B cell (primary cell): ENCODE measurements at regions of chr4 and their contacts with region 1.

Region 1: DNA sequence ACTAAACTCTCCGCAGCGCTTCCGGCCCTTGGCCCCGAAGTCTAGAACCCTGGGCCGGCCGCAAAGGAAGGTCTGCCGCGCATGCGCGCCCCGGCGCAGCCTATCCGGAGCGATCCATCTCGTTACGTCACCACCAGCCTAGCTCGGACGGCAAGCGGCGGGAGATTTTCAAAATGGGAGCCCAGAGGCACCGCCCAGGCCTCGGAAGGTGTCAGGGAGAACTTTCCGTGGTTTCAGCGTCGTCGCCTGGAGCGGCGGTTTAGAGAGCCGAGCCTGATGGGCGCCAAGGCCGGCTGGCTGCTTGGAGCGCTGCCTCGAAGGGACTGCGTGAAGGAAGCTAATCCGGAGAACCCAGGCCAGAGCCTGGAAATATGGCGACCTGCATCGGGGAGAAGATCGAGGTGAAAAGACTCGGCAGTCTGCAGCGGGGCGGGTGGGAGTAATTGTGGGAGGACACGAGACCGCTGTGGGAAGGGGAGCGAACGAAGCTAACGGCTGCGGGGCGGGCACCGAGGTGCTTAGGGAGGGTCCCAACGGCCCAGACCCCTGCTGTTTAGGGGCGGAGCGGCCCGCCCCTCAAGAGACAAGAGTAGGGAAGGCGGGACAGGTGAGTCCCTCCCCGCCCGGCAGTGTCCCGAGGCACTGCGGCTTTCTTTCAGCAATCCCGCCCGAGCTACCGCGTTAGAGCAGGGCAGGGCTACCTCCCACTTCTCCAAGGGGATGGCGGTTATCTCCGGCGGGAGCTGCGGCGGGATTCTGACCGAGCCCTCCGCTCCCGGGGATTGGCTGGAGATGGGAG is at the start of gene PLK4:
- DNase-seq: peak; percentile 96
- ATAC-seq: peak; percentile 95
- H3K4me3 ChIP-seq: peak within 1 kb of the TSS; percentile 72 to 97 (median 84)
- H3K4me3 Mint-ChIP-seq: peak within 1 kb of the TSS; percentile 98
- H3K27ac ChIP-seq: peak within 1 kb of the TSS; percentile 83 to 88
- H3K27ac Mint-ChIP-seq: peak within 1 kb of the TSS; percentile 97
- H3K4me1 ChIP-seq: peaks cover 7 to 10% of the 10 kb centered on the region in 2 donors
- H3K4me1 Mint-ChIP-seq: peaks cover 17% of the 10 kb centered on the region
- H3K27me3 ChIP-seq: no peaks in the 10 kb centered on the region
- H3K27me3 Mint-ChIP-seq: no peaks in the 10 kb centered on the region
- CTCF ChIP-seq: no peak
- total RNA-seq, gene PLK4: 2.8 and 4.3 TPM in 2 replicates

Region 2: GRCh38 chr4:126583509-126583908 is 1297.5 kb before region 1 on chr4:
- CTCF ChIA-PET with region 1: no interaction called
- POLR2A ChIA-PET with region 1: no interaction called
- intact Hi-C with region 1: no loop called
- DNase-seq: no peak
- ATAC-seq: no peak
- H3K4me3 ChIP-seq: no peak overlapping the region
- H3K4me3 Mint-ChIP-seq: no peak overlapping the region
- H3K27ac ChIP-seq: no peak overlapping the region
- H3K27ac Mint-ChIP-seq: no peak overlapping the region
- H3K4me1 ChIP-seq: no peaks in the 10 kb centered on the region
- H3K4me1 Mint-ChIP-seq: no peaks in the 10 kb centered on the region
- H3K27me3 ChIP-seq: no peaks in the 10 kb centered on the region
- H3K27me3 Mint-ChIP-seq: no peaks in the 10 kb centered on the region
- CTCF ChIP-seq: no peak

Region 3: DNA sequence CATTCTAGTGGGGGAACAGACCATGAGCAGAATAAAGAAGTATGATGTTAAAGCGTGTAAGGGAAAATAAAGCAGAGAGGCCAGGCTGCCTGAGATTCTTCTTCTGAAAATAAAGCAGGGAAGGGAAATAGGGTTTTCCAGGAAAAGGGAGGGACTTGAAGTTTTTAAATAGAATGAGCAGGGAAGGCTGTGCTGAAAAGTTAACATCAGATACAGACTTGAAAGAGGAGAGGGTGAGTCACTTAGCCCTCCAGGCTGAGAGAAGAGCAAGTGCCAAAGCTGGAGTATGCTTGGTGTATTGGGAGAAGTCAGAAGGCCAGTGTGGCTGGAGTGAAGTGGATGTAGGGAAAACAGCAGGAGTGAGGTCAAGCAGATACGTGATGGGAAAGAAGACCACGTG is 10.3 kb before region 1 on chr4:
- CTCF ChIA-PET with region 1: no interaction called
- POLR2A ChIA-PET with region 1: no interaction called
- intact Hi-C with region 1: no loop called
- DNase-seq: no peak
- ATAC-seq: no peak
- H3K4me3 ChIP-seq: no peak overlapping the region
- H3K4me3 Mint-ChIP-seq: no peak overlapping the region
- H3K27ac ChIP-seq: no peak overlapping the region
- H3K27ac Mint-ChIP-seq: no peak overlapping the region
- H3K4me1 ChIP-seq: no peaks in the 10 kb centered on the region
- H3K4me1 Mint-ChIP-seq: no peaks in the 10 kb centered on the region
- H3K27me3 ChIP-seq: no peaks in the 10 kb centered on the region
- H3K27me3 Mint-ChIP-seq: no peaks in the 10 kb centered on the region
- CTCF ChIP-seq: no peak

Region 4: DNA sequence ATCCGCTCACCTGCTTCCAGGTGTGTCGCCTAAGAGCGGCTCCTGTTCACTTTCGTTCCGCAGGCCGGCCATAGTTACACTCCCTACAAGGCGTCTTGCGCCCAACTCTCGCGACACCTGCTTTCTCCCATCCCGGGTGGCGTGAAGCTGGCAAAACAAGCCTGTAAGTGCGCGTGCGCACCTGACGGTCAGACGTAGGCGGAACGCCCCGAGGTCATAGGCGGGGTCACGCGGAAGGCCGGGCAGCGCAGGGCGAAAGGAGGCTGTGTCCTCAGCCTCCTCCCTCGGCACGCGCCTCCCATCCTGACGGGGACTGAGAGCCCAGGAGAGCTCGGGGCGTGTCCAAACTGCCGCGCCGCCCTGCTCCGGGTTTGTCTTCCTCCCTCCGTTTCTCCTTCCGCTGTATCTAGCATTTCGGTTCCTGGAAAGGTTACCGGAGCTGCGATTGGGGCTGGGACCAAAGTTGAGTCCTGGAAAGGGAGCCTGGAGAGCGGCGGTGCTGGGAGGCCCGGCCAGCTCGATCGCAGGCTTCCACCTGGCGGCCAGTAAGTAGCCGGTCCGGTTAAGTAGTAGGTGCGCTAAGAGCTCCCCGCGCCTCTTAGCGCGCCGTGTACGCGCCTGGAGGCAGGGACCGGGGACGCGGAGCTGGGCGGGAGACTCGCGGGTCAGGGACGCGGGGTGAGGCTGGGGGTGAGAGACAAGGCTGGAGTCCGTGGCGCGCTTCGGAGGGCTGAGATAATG is 84.3 kb after region 1 on chr4 and contains the starts of genes ABHD18 and MFSD8:
- CTCF ChIA-PET with region 1: interaction called, 5 read pairs
- POLR2A ChIA-PET with region 1: interaction called, 8 read pairs
- intact Hi-C with region 1: loop called (anchors 1 kb)
- DNase-seq: peak; percentile 100
- ATAC-seq: peak; percentile 97
- H3K4me3 ChIP-seq: peak within 1 kb of the TSS; percentile 76 to 100 (median 85)
- H3K4me3 Mint-ChIP-seq: peak within 1 kb of the TSS; percentile 98
- H3K27ac ChIP-seq: peak within 1 kb of the TSS; percentile 86 to 96
- H3K27ac Mint-ChIP-seq: peak within 1 kb of the TSS; percentile 97
- H3K4me1 ChIP-seq: peaks cover 5 to 18% of the 10 kb centered on the region in 2 donors
- H3K4me1 Mint-ChIP-seq: peaks cover 34% of the 10 kb centered on the region
- H3K27me3 ChIP-seq: no peaks in the 10 kb centered on the region
- H3K27me3 Mint-ChIP-seq: no peaks in the 10 kb centered on the region
- CTCF ChIP-seq: peak; percentile 33
- total RNA-seq, gene ABHD18: 17.5 and 18.3 TPM in 2 replicates
- total RNA-seq, gene MFSD8: 52.2 and 53.1 TPM in 2 replicates

Region 5: DNA sequence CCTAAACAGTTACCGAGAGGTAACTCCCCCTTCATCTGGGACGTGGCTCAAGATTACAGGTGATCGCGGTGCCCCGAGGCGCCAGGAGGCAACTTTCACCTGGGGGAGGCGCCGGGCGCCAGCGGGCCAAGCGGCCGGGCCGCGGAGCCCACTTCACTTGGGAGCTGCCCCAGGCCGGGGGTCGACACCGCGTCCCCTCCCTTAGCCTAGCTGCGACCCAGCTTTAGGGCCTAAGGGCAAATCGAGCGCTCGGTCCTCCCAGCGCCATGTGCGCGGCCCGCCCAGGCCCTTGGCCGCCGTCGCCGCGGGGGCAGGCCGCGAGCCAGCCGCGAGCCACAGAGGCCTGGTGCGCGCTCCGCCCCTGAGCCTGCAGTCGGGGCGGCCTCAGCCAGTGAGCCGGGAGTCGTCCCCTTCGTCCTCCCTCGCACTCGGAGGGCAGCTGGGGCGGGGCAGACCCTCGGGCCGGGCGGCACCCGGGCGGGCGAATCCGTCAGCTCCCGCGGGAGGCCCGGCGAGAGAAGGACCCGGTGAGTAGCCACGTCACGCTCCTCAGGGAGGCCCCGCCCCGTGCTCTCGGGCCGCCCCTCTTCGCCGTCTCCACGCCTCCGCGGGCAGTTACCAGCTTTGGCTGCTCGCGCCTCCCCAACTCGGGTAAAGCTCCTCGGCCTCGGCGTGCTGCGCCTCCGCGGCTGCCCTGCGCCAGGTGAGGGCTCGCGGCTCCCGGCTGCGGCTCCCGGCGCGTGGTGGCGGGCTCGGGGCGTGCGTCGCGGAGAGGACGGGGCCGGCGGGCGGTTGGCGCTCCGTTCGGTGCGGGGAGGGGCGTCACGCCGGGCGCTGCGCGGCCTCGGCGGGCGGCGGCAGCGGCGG is 180.0 kb after region 1 on chr4 and contains the start of gene LARP1B:
- CTCF ChIA-PET with region 1: no interaction called
- POLR2A ChIA-PET with region 1: interaction called, 4 read pairs
- intact Hi-C with region 1: loop called (anchors 1 kb)
- DNase-seq: peak; percentile 95
- ATAC-seq: peak; percentile 84
- H3K4me3 ChIP-seq: peak within 1 kb of the TSS; percentile 41 to 72 (median 66)
- H3K4me3 Mint-ChIP-seq: peak within 1 kb of the TSS; percentile 90
- H3K27ac ChIP-seq: peak within 1 kb of the TSS; percentile 84 to 96
- H3K27ac Mint-ChIP-seq: peak within 1 kb of the TSS; percentile 92
- H3K4me1 ChIP-seq: peaks cover 3 to 12% of the 10 kb centered on the region in 2 donors
- H3K4me1 Mint-ChIP-seq: peaks cover 11% of the 10 kb centered on the region
- H3K27me3 ChIP-seq: no peaks in the 10 kb centered on the region
- H3K27me3 Mint-ChIP-seq: no peaks in the 10 kb centered on the region
- CTCF ChIP-seq: no peak
- total RNA-seq, gene LARP1B: 13.6 and 14.6 TPM in 2 replicates